ENCODE measurements at regions of chr7 and their contacts with region 1.

Region 1: GRCh38 chr7:151008511-151009323 is 15.6 kb downstream of the ATG9B start:
- DNase-seq: peak; percentile 75 to 99
- H3K4me3 ChIP-seq: peak overlapping the region in 1 of 4 experiments; percentile 27; a peak in 1 of 8 replicates
- H3K27ac ChIP-seq: no peak overlapping the region
- H3K4me1 ChIP-seq: peaks cover 0 to 28% (median 22%) of the 10 kb centered on the region in 4 experiments; a peak in 6 of 7 replicates
- H3K27me3 ChIP-seq: peaks cover 0 to 3% (median 0%) of the 10 kb centered on the region in 4 experiments; a peak in 2 of 7 replicates
- CTCF ChIP-seq: peak in 2 of 3 experiments; percentile 90 to 92; a peak in 3 of 4 replicates
- EP300 ChIP-seq: 0 out of 3 replicates have a peak, but pooled peaks of 1 of the 2 experiments have one; percentile 22
- POLR2A ChIP-seq: no peak
- RAD21 ChIP-seq: peak; percentile 21 to 53; a peak in 3 of 4 replicates

Region 2: GRCh38 chr7:150974468-150975391 is 34.0 kb before region 1 on chr7:
- CTCF ChIA-PET with region 1: interaction called, 29 read pairs
- POLR2A ChIA-PET with region 1: interaction called, 5 read pairs
- DNase-seq: peak in 1 of 2 experiments; percentile 72
- H3K4me3 ChIP-seq: peak overlapping the region; percentile 33 to 93 (median 58)
- H3K27ac ChIP-seq: no peak overlapping the region
- H3K4me1 ChIP-seq: peaks cover 5 to 39% (median 31%) of the 10 kb centered on the region in 4 experiments
- H3K27me3 ChIP-seq: peaks cover 2 to 24% (median 22%) of the 10 kb centered on the region in 4 experiments
- CTCF ChIP-seq: peak in 1 of 3 experiments; percentile 23; a peak in 2 of 4 replicates
- EP300 ChIP-seq: no peak
- POLR2A ChIP-seq: no peak
- RAD21 ChIP-seq: no peak

Region 3: GRCh38 chr7:150994141-150994964 is 14.4 kb before region 1 on chr7:
- CTCF ChIA-PET with region 1: interaction called, 142 read pairs
- POLR2A ChIA-PET with region 1: interaction called, 9 read pairs
- DNase-seq: no peak
- H3K4me3 ChIP-seq: no peak overlapping the region
- H3K27ac ChIP-seq: no peak overlapping the region
- H3K4me1 ChIP-seq: peaks cover 4 to 23% (median 14%) of the 10 kb centered on the region in 4 experiments
- H3K27me3 ChIP-seq: no peaks in the 10 kb centered on the region
- CTCF ChIP-seq: no peak
- EP300 ChIP-seq: no peak
- POLR2A ChIP-seq: no peak
- RAD21 ChIP-seq: no peak

Region 4: GRCh38 chr7:151035902-151036301 is 27.2 kb after region 1 on chr7:
- CTCF ChIA-PET with region 1: interaction called, 11 read pairs
- POLR2A ChIA-PET with region 1: no interaction called
- DNase-seq: no peak
- H3K4me3 ChIP-seq: no peak overlapping the region
- H3K27ac ChIP-seq: no peak overlapping the region
- H3K4me1 ChIP-seq: no peaks in the 10 kb centered on the region
- H3K27me3 ChIP-seq: no peaks in the 10 kb centered on the region
- CTCF ChIP-seq: no peak
- EP300 ChIP-seq: no peak
- POLR2A ChIP-seq: no peak
- RAD21 ChIP-seq: no peak

Region 5: GRCh38 chr7:151057989-151058780 is 49.5 kb after region 1 on chr7:
- CTCF ChIA-PET with region 1: interaction called, 25 read pairs
- POLR2A ChIA-PET with region 1: interaction called, 3 read pairs
- DNase-seq: peak; percentile 98 to 99
- H3K4me3 ChIP-seq: peak overlapping the region; percentile 59 to 91 (median 78)
- H3K27ac ChIP-seq: peak overlapping the region; percentile 61; the same call in 1 of the 2 replicates
- H3K4me1 ChIP-seq: peaks cover 9 to 41% (median 29%) of the 10 kb centered on the region in 4 experiments
- H3K27me3 ChIP-seq: peaks cover 0 to 9% (median 4%) of the 10 kb centered on the region in 4 experiments; a peak in 5 of 7 replicates
- CTCF ChIP-seq: no peak
- EP300 ChIP-seq: no peak
- POLR2A ChIP-seq: peak in 1 of 2 experiments; percentile 49; a peak in 1 of 3 replicates
- RAD21 ChIP-seq: no peak